ENCODE measurements at regions of chr17 and their contacts with region 1.

Region 1: GRCh38 chr17:40615295-40615988 is 32.2 kb downstream of the SMARCE1 start:
- DNase-seq: peak; percentile 84
- H3K4me3 Mint-ChIP-seq: peak overlapping the region; percentile 13
- H3K27ac Mint-ChIP-seq: peak overlapping the region; percentile 89
- H3K4me1 Mint-ChIP-seq: peaks cover 76% of the 10 kb centered on the region
- H3K27me3 Mint-ChIP-seq: no peaks in the 10 kb centered on the region

Region 2: DNA sequence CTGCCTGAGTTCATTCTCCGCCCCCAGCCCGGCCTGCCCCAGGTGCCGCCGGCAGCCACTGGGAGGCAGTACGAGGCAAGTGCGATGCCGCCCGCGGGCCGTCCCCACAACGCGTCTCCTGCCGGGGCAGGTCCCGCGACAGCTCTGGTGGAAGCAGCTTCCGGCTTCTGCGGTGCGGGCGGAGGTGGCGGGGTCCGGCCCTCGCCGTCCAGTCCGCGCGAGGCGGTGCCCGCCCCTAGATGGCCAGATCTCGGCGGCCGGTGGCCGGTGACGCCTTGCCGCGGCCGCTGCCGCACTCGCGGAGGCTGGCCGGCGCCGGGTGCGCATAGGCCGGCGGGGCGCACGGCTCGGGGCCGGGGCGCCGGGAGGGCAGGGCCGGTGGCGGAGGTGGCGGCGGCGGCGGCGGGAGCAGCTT is 252.7 kb before region 1 on chr17:
- CTCF ChIA-PET with region 1: interaction called, 7 read pairs
- intact Hi-C with region 1: loop called (anchors 2 kb)
- DNase-seq: peak; percentile 95
- H3K4me3 Mint-ChIP-seq: peak overlapping the region; percentile 76
- H3K27ac Mint-ChIP-seq: no peak overlapping the region
- H3K4me1 Mint-ChIP-seq: peaks cover 12% of the 10 kb centered on the region
- H3K27me3 Mint-ChIP-seq: peaks cover 12% of the 10 kb centered on the region

Region 3: DNA sequence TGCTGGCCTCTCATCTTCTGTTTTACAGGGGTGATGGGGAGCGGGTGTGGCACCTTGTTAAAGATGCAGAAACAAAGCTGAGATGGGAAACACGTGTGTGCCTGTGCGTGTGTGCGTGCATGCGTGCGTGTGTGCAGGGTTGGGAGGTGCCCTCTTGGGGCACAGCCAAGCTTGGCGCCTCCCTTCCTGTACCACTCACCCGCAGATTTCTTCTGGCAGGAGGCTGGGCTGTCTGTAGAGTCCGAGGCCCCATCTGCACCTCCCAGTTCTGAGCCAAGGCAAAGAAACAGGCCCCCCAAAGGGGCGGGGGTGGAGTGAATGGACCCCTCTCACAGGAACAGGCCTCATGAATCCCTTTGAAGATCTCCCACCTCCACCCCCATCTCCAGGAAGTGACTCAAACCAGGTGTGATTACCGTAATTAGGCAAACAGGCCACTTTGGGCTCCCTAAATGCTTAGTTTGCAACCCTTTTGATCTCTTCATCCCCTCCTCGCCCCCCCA is 134.9 kb before region 1 on chr17:
- CTCF ChIA-PET with region 1: interaction called, 3 read pairs
- intact Hi-C with region 1: loop called (anchors 1 kb)
- DNase-seq: peak; percentile 95
- H3K4me3 Mint-ChIP-seq: peak overlapping the region; percentile 67
- H3K27ac Mint-ChIP-seq: peak overlapping the region; percentile 94
- H3K4me1 Mint-ChIP-seq: peaks cover 60% of the 10 kb centered on the region
- H3K27me3 Mint-ChIP-seq: no peaks in the 10 kb centered on the region

Region 4: DNA sequence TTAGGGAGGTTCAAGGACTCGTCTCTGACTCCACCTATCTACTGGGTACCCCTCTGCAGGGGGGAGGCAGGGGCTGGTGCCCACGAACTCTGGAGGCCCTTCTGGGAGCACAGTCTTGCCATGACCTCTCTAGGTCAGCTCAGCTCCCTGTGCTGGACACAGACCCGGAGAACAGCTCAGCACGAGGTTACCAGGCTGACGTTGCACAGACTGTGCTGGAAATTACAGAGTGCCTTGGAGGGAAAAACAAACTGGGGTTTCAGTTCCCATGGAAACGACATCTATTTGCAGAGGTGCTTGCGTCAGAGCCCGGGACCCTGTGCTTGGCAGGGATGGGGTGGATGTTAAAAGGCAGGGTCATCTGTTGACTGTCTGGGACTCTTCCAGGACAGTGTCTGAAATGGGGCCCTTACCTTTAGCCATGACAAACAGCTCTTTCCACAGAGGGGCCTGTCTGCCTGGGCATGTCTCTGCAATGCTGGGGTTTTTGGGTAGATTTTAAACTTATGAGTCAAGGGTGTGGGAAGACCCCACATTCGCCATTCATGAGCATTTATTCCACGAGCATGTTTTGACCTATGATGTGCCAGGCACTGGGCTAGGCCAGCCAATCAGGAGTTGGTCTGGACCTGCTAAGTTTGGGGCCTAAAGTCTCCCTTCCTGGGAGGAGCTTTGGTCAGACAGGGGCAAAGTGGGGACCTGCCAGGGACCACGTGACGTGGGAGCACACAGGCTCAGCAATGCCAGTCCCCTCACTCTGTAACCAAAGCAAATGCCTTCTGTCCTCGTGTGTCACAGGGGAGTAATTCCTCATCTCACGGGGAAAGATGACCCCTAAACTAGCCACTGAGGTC is 72.7 kb before region 1 on chr17:
- CTCF ChIA-PET with region 1: interaction called, 17 read pairs
- intact Hi-C with region 1: loop called (anchors 1 kb)
- DNase-seq: peak; percentile 89
- H3K4me3 Mint-ChIP-seq: peak overlapping the region; percentile 66
- H3K27ac Mint-ChIP-seq: peak overlapping the region; percentile 96
- H3K4me1 Mint-ChIP-seq: peaks cover 83% of the 10 kb centered on the region
- H3K27me3 Mint-ChIP-seq: no peaks in the 10 kb centered on the region

Region 5: DNA sequence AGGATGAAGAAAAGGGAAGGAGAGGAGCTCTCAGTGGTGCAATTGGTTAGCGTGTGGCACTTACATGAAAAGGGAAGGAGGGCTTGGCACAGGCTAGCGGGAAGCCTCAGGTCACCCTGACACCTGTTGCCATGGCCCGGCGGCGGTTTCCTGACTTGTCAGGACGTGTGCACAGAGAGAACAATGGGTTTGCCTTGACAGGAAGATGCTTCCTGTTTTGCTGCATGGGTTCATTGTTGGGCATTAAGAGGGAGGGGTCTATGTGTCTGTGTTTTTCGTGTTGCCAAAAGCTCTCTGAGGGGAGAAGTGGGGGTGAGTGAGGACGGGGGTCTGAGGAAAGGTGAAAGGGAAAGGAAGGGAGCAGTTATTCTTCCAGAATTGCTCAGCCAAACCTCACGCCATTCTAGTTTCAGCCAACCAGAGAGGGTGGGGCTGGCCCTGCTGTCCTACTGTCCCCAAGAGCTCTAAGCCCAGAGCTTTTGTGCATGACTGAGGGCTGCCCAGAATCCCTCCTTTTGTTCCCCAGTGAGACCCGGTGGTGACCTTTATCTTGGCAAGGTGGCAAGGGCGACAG is 33.0 kb before region 1 on chr17:
- CTCF ChIA-PET with region 1: interaction called, 28 read pairs
- intact Hi-C with region 1: loop called (anchors 1 kb)
- DNase-seq: peak; percentile 92
- H3K4me3 Mint-ChIP-seq: peak overlapping the region; percentile 45
- H3K27ac Mint-ChIP-seq: peak overlapping the region; percentile 71
- H3K4me1 Mint-ChIP-seq: peaks cover 86% of the 10 kb centered on the region
- H3K27me3 Mint-ChIP-seq: no peaks in the 10 kb centered on the region

Region 6: DNA sequence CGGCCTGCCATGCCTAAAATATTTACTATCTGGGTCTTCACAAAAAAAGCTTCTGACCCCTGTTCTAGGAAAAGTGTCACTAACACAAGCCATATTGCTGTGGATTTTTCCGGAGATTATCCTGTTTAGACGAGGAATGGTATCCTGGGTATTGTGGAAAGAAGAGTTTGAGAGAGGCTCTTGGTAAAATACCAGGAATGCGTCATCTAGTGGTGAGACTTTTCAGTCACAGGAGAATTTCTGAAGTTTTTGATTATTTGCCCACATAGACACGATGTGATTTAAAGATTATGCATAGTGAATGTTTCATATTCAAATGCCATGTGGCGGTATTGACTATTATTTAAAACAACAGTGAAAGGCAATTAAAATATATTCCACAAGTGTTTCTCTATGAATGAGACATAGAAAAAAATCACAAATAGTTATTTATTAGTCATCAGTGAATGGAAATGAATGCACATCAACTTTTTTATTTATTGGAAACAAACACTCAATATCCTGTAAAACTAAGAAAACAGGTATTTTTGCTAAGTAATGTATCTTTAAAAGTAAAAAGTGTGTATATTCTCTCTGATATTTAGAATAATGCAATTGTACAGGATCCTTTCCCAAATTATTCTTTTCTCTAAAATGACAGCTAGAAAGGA is 176.5 kb after region 1 on chr17:
- CTCF ChIA-PET with region 1: interaction called, 3 read pairs
- intact Hi-C with region 1: loop called (anchors 1 kb)
- DNase-seq: no peak
- H3K4me3 Mint-ChIP-seq: no peak overlapping the region
- H3K27ac Mint-ChIP-seq: no peak overlapping the region
- H3K4me1 Mint-ChIP-seq: no peaks in the 10 kb centered on the region
- H3K27me3 Mint-ChIP-seq: peaks cover 12% of the 10 kb centered on the region